Transverse colon (tissue), 4 donors: ENCODE measurements at regions of chr2 and their contacts with region 1.

Region 1: GRCh38 chr2:225660262-225661131 is 261.0 kb downstream of the NYAP2 start:
- DNase-seq: peak; percentile 76
- H3K4me3 ChIP-seq: no peak overlapping the region
- H3K27ac ChIP-seq: no peak overlapping the region
- H3K4me1 ChIP-seq: no peaks in the 10 kb centered on the region
- H3K27me3 ChIP-seq: no peaks in the 10 kb centered on the region
- CTCF ChIP-seq: peak; percentile 72 to 86 (median 78)
- EP300 ChIP-seq: no peak
- POLR2A ChIP-seq: no peak

Region 2: DNA sequence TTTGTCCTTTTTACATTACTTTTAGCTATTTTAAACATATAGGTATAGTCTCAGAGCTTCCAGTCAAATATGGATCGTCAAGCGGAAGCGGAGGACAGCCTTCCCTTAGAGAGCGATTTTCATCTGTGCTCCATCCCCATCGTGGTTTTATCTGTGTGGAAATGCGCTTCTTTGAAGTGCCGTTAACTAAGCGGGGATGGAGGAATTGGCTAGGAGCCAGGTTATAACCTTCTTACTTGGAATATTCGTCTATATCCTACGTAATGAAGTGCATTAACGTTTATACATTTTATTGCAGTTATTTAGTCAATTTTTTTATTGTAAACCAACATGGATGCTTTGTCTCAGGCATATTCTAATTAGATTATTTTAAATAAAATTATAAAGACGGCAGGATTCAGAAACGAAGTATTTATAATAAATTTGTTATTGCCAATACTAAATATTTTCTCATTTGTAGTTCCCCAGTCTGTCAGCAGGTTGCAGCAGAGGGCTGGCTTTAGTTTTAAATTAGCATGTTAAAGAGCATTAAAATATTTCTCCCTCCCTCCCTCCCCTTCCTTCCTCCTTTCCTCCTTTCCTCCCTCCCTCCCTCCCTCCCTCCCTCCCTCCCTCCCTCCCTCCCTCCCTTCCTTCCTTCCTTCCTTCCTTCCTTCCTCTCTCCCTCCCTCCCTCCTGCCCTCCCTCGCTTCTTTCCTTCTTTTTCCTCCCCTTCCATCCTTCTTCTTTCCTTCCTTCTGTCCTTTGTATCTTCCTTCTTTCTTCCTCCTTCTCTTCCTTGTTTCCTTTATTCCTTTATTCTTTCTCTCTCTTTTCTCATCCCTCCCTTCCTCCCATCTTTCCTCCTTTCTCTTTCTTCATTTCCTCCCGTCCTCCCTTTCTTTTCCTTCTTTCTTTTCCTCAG is 537.7 kb before region 1 on chr2:
- in situ Hi-C with region 1: loop called in 3 of 4 experiments (anchors 25 kb)
- intact Hi-C with region 1: loop called (anchors 10 kb)
- DNase-seq: no peak
- H3K4me3 ChIP-seq: no peak overlapping the region
- H3K27ac ChIP-seq: no peak overlapping the region
- H3K4me1 ChIP-seq: no peaks in the 10 kb centered on the region
- H3K27me3 ChIP-seq: no peaks in the 10 kb centered on the region
- CTCF ChIP-seq: peak; percentile 26 to 53 (median 41)
- EP300 ChIP-seq: no peak
- POLR2A ChIP-seq: no peak

Region 3: GRCh38 chr2:225646671-225647070 is 13.8 kb before region 1 on chr2:
- in situ Hi-C with region 1: no loop called
- intact Hi-C with region 1: no loop called
- DNase-seq: no peak
- H3K4me3 ChIP-seq: no peak overlapping the region
- H3K27ac ChIP-seq: no peak overlapping the region
- H3K4me1 ChIP-seq: no peaks in the 10 kb centered on the region
- H3K27me3 ChIP-seq: no peaks in the 10 kb centered on the region
- CTCF ChIP-seq: no peak
- EP300 ChIP-seq: no peak
- POLR2A ChIP-seq: no peak

Region 4: DNA sequence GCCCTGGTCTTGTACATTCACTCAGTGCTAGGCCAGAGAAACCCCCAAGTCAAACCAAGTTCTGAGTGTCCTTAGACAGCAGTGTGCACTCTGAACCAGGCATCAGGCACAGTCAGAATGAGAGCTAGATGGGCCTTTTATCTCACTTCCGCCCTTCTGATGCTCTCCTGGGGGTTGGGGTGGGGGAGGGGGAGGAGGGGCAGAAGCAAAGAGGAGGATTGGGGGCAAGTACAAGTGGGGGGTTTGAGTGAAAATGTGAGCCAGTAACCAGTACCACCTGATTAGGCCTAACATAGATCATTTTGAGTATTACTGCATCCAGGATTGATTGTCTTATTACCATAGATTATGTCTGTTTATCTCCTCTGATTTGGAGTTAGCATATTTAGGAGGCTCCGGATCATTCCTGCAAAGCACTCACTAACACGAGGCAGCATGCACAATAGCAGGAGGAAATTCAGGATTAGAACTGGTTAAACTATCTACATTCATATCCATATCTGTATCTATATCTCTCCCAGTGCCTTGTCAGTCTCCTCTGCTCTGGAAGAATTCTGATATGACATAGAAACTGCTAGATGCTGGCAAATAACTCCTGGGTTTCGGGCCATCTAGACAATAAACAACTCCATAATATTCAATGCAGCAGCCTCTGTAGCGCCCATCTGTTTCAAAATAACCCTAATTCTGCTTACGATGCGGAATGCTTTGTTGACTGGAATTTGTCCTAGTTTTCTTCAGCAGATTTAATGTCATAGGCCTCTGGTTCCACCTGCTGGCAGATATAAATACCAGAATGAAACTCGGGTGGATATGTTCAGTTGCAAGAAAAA is 1324.5 kb after region 1 on chr2:
- in situ Hi-C with region 1: loop called in 2 of 4 experiments (anchors 5 to 25 kb)
- intact Hi-C with region 1: no loop called
- DNase-seq: peak; percentile 15
- H3K4me3 ChIP-seq: no peak overlapping the region
- H3K27ac ChIP-seq: peak overlapping the region in 3 of 4 donors; percentile 4 to 34 (median 31)
- H3K4me1 ChIP-seq: peaks cover 0 to 7% (median 2%) of the 10 kb centered on the region in 4 donors
- H3K27me3 ChIP-seq: no peaks in the 10 kb centered on the region
- CTCF ChIP-seq: peak; percentile 64 to 70 (median 68)
- EP300 ChIP-seq: no peak
- POLR2A ChIP-seq: no peak

Region 5: DNA sequence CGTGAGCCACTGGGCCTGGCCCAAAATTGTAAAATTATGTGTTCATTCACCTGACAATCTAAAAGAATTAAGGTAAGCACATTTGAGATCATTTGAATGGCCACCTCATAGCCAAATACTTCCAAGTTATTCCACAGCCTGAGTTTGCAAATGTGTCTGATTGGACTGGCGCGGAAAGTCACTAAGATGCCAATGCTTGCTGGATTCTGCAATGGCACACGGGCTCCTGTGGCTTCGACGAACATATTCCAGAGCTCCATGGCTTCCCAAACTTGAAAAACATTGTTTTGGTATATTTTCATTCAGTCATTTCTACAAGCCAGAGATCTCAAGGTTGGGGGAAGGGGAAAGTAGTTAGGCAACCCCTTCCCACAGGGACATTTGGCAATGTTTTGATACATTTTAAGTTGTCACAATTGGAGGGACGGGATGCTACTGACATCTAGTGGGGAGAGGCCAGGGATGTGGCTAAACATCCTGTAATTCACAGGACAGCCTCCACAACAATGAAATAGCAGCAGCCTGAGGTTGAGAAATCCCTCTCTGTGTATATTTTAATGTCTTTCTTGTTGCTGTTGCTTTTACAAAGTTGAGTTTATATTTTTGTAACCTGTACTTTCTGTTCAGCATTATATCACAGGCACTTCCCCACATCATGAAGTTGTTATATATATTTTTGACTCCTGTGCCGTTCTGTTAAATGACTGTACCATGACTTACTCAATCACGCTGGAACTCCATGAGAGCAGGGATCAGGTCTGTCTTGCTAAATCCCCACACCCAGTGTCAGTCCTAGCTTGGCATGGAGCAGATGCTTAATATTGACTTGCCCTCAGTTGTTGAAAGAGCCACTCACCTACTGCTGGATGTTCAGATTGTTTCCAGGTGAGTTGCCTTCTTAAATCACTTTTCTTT is 1446.6 kb after region 1 on chr2:
- in situ Hi-C with region 1: loop called in 2 of 4 experiments (anchors 10 to 25 kb)
- intact Hi-C with region 1: no loop called
- DNase-seq: peak; percentile 53
- H3K4me3 ChIP-seq: no peak overlapping the region
- H3K27ac ChIP-seq: no peak overlapping the region
- H3K4me1 ChIP-seq: peaks cover 0 to 3% (median 0%) of the 10 kb centered on the region in 4 donors
- H3K27me3 ChIP-seq: no peaks in the 10 kb centered on the region
- CTCF ChIP-seq: peak; percentile 63 to 68 (median 67)
- EP300 ChIP-seq: no peak
- POLR2A ChIP-seq: no peak

Region 6: GRCh38 chr2:227117027-227117426 is 1456.5 kb after region 1 on chr2:
- in situ Hi-C with region 1: loop called in 2 of 4 experiments (anchors 10 to 25 kb)
- intact Hi-C with region 1: no loop called
- DNase-seq: no peak
- H3K4me3 ChIP-seq: no peak overlapping the region
- H3K27ac ChIP-seq: no peak overlapping the region
- H3K4me1 ChIP-seq: no peaks in the 10 kb centered on the region
- H3K27me3 ChIP-seq: no peaks in the 10 kb centered on the region
- CTCF ChIP-seq: no peak
- EP300 ChIP-seq: no peak
- POLR2A ChIP-seq: no peak